B cell (primary cell): ENCODE measurements at regions of chr15 and their contacts with region 1.

Region 1: DNA sequence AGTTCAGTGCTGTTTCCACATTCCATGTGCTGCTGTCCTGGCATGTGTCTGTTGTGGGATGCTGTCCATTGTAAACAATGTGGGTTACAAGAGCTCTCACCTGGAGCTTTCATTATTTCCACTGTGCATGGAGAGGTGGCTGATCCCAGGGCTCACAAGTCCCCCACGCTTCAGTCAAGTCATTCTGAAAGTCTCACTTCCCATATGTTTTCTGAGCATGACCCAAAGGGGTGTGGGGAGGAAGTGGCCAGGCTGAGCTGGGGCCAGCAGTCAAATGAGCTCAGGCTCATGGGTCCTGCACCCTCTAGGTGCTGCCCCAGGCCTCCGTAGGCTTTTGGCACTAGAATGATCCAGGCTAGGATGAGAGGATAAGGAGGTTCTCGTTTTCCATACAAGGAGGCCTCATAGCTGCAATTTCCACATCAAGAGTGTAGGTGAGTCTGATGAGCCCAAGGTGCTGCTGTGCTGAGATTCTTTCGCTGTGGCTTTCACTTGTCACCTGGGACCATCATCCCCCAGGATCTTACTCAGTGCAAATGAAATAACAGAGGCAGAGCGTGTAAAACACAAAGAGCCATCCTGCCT is 22.0 kb downstream of the STARD5 start:
- DNase-seq: peak; percentile 84
- ATAC-seq: peak; percentile 73
- H3K4me3 ChIP-seq: peak overlapping the region; percentile 79 to 100 (median 87)
- H3K4me3 Mint-ChIP-seq: peak overlapping the region; percentile 100
- H3K27ac ChIP-seq: peak overlapping the region; percentile 95 to 98
- H3K27ac Mint-ChIP-seq: peak overlapping the region; percentile 98
- H3K4me1 ChIP-seq: peaks cover 70 to 92% of the 10 kb centered on the region in 2 donors
- H3K4me1 Mint-ChIP-seq: peaks cover 92% of the 10 kb centered on the region
- H3K27me3 ChIP-seq: no peaks in the 10 kb centered on the region
- H3K27me3 Mint-ChIP-seq: no peaks in the 10 kb centered on the region
- CTCF ChIP-seq: no peak

Region 2: DNA sequence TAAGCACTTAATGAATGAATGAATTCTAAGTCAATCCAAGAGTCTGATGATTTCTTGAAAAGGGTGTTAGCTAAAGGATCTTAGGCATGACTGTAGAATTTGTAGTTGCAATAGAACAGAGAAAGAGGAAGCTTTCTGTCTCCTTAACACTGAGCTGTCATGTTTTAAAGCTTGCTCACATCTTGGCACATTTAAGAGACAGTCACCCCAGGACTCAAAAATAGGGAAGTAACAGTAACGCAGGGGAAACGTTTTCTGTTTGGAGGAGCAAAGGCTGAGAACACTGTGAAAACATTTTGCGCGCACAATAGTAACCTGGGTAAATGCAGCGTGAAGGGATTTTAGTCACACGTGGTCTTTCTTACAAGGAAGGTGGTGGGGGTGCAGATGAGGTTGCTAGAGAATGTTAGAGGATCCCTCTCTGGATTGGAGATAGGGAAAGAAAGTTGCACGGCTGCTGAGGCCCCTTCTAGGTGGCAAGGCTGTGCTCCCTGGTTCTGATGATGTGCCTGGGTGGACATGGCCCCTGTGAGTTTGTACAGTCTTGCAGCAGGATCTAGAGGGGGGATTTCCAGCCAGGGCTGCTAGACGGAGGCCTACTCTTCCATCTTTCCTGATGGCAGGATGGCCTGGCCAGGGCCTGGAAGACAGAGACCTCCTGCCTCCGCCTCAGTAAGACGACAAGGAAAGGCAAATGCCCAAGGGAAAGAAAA is 10.0 kb after region 1 on chr15:
- CTCF ChIA-PET with region 1: interaction called, 65 read pairs
- POLR2A ChIA-PET with region 1: interaction called, 63 read pairs
- intact Hi-C with region 1: loop called (anchors 1 kb)
- DNase-seq: peak; percentile 85
- ATAC-seq: peak; percentile 86
- H3K4me3 ChIP-seq: peak overlapping the region in 3 of 5 experiments; percentile 23 to 27 (median 25)
- H3K4me3 Mint-ChIP-seq: peak overlapping the region; percentile 65
- H3K27ac ChIP-seq: peak overlapping the region; percentile 66 to 88
- H3K27ac Mint-ChIP-seq: peak overlapping the region; percentile 87
- H3K4me1 ChIP-seq: peaks cover 62 to 67% of the 10 kb centered on the region in 2 donors
- H3K4me1 Mint-ChIP-seq: peaks cover 80% of the 10 kb centered on the region
- H3K27me3 ChIP-seq: no peaks in the 10 kb centered on the region
- H3K27me3 Mint-ChIP-seq: no peaks in the 10 kb centered on the region
- CTCF ChIP-seq: no peak

Region 3: DNA sequence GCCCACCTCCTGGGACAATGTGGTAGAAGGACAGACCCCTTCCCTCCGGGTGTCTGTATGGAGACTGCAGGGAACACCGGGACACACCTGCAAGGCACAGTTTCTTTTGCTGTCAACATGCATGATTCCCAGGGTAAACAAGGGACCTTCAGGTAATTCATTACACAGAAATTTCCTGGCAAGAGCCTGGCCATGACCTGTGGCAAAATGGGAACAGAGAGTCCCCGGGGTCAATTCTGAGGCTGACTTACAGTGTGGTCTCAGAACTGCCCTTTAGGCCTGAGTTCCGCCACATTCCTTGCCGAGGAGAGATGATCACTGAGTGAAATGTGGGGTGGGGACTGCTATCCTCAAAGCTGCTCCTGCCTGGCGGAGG is 15.7 kb after region 1 on chr15:
- CTCF ChIA-PET with region 1: interaction called, 10 read pairs
- POLR2A ChIA-PET with region 1: interaction called, 12 read pairs
- intact Hi-C with region 1: loop called (anchors 2 kb)
- DNase-seq: no peak
- ATAC-seq: no peak
- H3K4me3 ChIP-seq: no peak overlapping the region
- H3K4me3 Mint-ChIP-seq: peak overlapping the region; percentile 41
- H3K27ac ChIP-seq: peak overlapping the region; percentile 26 to 88
- H3K27ac Mint-ChIP-seq: peak overlapping the region; percentile 64
- H3K4me1 ChIP-seq: peaks cover 66 to 75% of the 10 kb centered on the region in 2 donors
- H3K4me1 Mint-ChIP-seq: peaks cover 72% of the 10 kb centered on the region
- H3K27me3 ChIP-seq: no peaks in the 10 kb centered on the region
- H3K27me3 Mint-ChIP-seq: no peaks in the 10 kb centered on the region
- CTCF ChIP-seq: no peak

Region 4: GRCh38 chr15:81323944-81324881 is 22.3 kb after region 1 on chr15 and contains the start of gene STARD5:
- CTCF ChIA-PET with region 1: interaction called, 10 read pairs
- POLR2A ChIA-PET with region 1: interaction called, 6 read pairs
- intact Hi-C with region 1: loop called (anchors 1 kb)
- DNase-seq: peak; percentile 92
- ATAC-seq: peak; percentile 99
- H3K4me3 ChIP-seq: peak within 1 kb of the TSS; percentile 54 to 79 (median 77)
- H3K4me3 Mint-ChIP-seq: peak within 1 kb of the TSS; percentile 100
- H3K27ac ChIP-seq: peak within 1 kb of the TSS; percentile 27 to 68
- H3K27ac Mint-ChIP-seq: peak within 1 kb of the TSS; percentile 95
- H3K4me1 ChIP-seq: peaks cover 18 to 32% of the 10 kb centered on the region in 2 donors
- H3K4me1 Mint-ChIP-seq: peaks cover 32% of the 10 kb centered on the region
- H3K27me3 ChIP-seq: no peaks in the 10 kb centered on the region
- H3K27me3 Mint-ChIP-seq: no peaks in the 10 kb centered on the region
- CTCF ChIP-seq: no peak
- total RNA-seq, gene STARD5: 15.7 and 17.2 TPM in 2 replicates

Region 5: GRCh38 chr15:82003916-82004315 is 702.0 kb after region 1 on chr15:
- CTCF ChIA-PET with region 1: no interaction called
- POLR2A ChIA-PET with region 1: no interaction called
- intact Hi-C with region 1: no loop called
- DNase-seq: no peak
- ATAC-seq: no peak
- H3K4me3 ChIP-seq: no peak overlapping the region
- H3K4me3 Mint-ChIP-seq: no peak overlapping the region
- H3K27ac ChIP-seq: no peak overlapping the region
- H3K27ac Mint-ChIP-seq: no peak overlapping the region
- H3K4me1 ChIP-seq: no peaks in the 10 kb centered on the region
- H3K4me1 Mint-ChIP-seq: no peaks in the 10 kb centered on the region
- H3K27me3 ChIP-seq: no peaks in the 10 kb centered on the region
- H3K27me3 Mint-ChIP-seq: peaks cover 3% of the 10 kb centered on the region
- CTCF ChIP-seq: no peak